ENCODE measurements at regions of chr7 and their contacts with region 1.

Region 1: DNA sequence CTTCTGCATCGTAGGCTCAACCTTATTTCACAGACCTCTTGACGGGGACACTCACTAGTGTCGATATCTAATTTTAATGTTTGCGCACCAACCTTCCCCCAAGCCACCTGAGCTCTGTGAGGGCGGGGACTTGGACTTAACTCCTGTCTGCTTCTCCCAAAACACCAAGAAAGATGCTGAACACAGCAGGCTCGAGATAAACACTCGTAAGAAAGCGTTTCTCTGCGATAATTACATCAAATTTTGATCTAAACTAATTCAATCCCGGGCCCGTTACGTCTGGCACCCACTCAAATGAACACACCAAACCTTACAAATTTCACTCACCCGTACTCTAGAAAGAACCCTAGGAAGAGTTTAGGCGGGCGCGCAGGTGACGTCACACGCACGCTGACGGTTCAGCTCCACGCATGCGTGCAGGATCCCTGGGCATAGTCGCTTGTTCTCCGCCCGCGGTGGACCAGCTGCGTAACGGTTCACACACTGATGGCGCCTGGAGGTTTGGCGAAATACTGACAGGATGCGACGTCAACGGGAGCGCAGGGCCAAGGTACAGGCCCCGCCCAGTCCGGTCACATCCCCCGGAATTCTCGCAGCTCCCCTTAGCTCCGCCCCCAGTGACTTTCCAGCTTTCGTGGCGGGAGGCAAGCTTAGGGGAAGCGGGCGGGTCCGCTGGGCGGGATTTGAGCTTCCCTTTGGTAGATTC is at the start of gene POT1:
- DNase-seq: peak; percentile 99 to 100
- ATAC-seq: peak; percentile 100
- H3K4me3 ChIP-seq: peak within 1 kb of the TSS; percentile 74 to 97
- H3K27ac ChIP-seq: peak within 1 kb of the TSS; percentile 51 to 53
- H3K4me1 ChIP-seq: no peaks in the 10 kb centered on the region
- H3K27me3 ChIP-seq: no peaks in the 10 kb centered on the region
- total RNA-seq, gene POT1: 23.0 to 28.2 TPM

Region 2: GRCh38 chr7:124618871-124619270 is 310.7 kb before region 1 on chr7:
- intact Hi-C with region 1: no loop called
- DNase-seq: no peak
- ATAC-seq: no peak
- H3K4me3 ChIP-seq: no peak overlapping the region
- H3K27ac ChIP-seq: no peak overlapping the region
- H3K4me1 ChIP-seq: no peaks in the 10 kb centered on the region
- H3K27me3 ChIP-seq: no peaks in the 10 kb centered on the region

Region 3: DNA sequence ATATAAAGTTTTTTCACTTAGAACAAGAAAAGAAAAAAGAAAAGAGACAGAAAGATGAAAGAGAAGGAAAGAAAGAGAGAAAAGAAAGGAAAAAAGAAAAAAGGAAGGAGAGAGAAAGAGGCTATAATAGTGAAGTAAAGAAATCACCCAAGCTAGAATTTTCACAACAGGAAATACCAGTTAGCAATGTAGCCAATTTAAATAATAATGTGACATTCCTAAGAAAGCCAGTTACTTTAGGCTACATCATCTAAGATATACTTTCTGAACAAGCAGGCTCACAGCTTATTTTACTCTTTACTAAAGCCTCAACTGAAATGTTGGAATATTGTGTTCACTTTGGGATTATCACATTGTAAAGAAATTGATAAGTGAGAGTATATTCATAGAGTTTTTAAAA is 217.6 kb before region 1 on chr7:
- intact Hi-C with region 1: loop called in 1 of 2 experiments (anchors 5 kb)
- DNase-seq: no peak
- ATAC-seq: no peak
- H3K4me3 ChIP-seq: no peak overlapping the region
- H3K27ac ChIP-seq: peak overlapping the region in 1 of 2 donors; percentile 90
- H3K4me1 ChIP-seq: peaks cover 0 to 6% of the 10 kb centered on the region in 2 donors
- H3K27me3 ChIP-seq: no peaks in the 10 kb centered on the region

Region 4: DNA sequence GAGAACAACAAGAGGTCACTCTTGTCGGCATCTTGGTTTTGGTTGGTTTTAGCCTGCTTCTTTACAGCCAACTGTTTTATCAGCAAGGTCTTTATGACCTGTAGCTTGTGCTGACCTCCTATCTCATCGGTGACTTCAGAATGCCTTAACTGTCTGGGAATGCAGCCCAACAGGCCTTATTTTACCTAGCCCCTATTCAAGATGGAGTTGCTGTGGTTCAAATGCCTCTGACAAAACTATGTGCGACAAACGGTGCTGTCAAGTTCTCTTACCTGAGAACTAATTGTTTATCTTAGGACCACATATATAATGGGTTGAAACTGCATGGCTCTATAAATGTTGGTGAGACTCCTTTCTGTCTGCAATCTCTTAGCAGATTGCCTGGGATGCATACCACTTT is 35.9 kb after region 1 on chr7:
- intact Hi-C with region 1: loop called in 1 of 2 experiments (anchors 5 kb)
- DNase-seq: no peak
- ATAC-seq: no peak
- H3K4me3 ChIP-seq: no peak overlapping the region
- H3K27ac ChIP-seq: no peak overlapping the region
- H3K4me1 ChIP-seq: no peaks in the 10 kb centered on the region
- H3K27me3 ChIP-seq: no peaks in the 10 kb centered on the region

Region 5: DNA sequence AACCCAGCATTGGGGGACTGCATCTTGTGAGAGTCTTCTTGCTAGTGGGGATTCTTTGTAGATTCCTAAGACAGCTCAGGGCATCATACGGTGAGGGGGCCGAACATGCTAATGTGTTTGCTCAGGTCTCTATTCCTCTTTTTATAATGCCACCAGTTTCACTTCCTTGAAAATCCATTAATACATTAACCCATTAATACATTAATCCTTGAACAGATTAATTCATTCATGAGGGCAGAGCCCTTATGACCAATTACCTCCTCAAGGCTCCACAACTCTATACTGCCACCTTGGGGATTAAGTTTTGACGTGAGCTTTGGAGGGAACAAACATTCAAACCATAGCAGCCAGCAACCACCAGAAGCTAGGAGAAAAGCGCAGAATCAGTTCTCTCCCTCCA is 67.2 kb after region 1 on chr7:
- intact Hi-C with region 1: loop called in 1 of 2 experiments (anchors 10 kb)
- DNase-seq: no peak
- ATAC-seq: no peak
- H3K4me3 ChIP-seq: no peak overlapping the region
- H3K27ac ChIP-seq: no peak overlapping the region
- H3K4me1 ChIP-seq: no peaks in the 10 kb centered on the region
- H3K27me3 ChIP-seq: no peaks in the 10 kb centered on the region

Measured in aorta (tissue), 5 donors.